Activated naive CD4-positive, alpha-beta T cell treated with anti-CD3 and anti-CD28 coated beads, Interleukin-2, amount 10 ng/mL, durations not matched to agents 7 days and 5 days (primary cell): ENCODE measurements at regions of chr2 and their contacts with region 1.

Region 1: DNA sequence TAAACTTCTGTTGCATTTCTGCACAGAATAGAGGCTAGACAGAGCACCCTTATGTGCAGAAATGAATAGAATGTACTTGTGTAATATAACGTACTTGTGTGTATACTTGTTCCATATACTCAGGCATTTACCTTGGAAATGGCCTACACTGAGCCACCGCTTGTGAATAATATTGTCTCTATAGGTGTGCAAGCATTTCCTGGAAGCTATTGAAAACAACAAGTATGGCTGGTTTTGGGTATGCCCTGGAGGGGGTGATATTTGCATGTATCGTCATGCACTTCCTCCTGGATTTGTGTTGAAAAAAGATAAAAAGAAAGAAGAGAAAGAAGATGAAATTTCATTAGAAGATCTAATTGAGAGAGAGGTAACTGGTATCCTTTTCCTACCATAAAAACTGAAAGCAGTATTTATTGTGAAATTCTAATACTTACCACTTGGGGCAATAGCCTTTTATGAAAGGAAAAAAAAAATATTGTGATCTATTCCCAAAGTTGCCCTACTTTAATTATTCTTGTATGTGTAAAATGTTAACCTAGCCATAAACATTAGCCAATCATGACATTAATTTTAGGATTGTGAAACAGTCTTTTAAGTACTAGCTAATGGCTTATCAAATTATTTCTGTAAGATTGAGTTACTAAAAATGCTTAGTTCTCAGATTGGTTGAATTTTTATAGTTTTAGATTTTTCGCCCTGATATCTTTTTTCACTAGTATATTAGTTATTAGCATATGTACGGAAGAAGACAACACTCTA is 18.0 kb downstream of the ZC3H15 start:
- DNase-seq: no peak
- H3K4me3 Mint-ChIP-seq: no peak overlapping the region
- H3K27ac Mint-ChIP-seq: peak overlapping the region; percentile 22
- H3K4me1 Mint-ChIP-seq: peaks cover 6% of the 10 kb centered on the region
- H3K27me3 Mint-ChIP-seq: no peaks in the 10 kb centered on the region

Region 2: GRCh38 chr2:186485871-186486650 is 18.0 kb before region 1 on chr2 and contains the start of gene ZC3H15:
- CTCF ChIA-PET with region 1: interaction called, 10 read pairs
- DNase-seq: peak; percentile 97
- H3K4me3 Mint-ChIP-seq: peak within 1 kb of the TSS; percentile 96
- H3K27ac Mint-ChIP-seq: peak within 1 kb of the TSS; percentile 97
- H3K4me1 Mint-ChIP-seq: peaks cover 58% of the 10 kb centered on the region
- H3K27me3 Mint-ChIP-seq: no peaks in the 10 kb centered on the region

Region 3: DNA sequence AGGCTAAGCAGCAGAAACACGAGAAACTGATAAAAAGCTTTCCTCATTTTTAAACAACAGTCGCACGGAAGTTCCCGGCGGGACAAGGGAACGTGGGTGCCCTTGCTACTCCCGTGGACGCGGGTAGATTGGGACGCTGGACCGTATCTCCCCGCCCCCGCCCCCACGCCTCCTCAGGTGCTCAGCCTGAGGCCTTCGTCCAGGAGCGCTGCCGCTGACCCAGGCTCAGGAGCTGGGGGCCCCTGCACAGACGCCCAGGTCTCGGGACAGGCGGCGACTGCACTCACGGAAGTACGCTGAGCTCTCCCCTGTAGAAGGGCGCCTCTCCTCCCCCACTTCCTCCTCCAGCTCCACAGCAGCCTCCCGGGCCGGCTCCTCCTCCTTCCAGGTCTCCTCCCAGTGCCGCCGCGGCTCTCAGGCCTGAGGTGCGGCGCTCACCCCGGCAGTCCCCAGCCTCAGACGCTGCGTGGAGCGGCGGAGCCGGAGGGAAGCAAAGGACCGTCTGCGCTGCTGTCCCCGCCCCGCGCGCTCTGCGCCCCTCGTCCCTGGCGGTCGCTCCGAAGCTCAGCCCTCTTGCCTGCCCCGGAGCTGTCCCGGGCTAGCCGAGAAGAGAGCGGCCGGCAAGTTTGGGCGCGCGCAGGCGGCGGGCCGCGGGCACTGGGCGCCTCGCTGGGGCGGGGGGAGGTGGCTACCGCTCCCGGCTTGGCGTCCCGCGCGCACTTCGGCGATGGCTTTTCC is 85.8 kb after region 1 on chr2 and contains the start of gene ITGAV:
- CTCF ChIA-PET with region 1: interaction called, 17 read pairs
- DNase-seq: peak; percentile 92
- H3K4me3 Mint-ChIP-seq: peak within 1 kb of the TSS; percentile 84
- H3K27ac Mint-ChIP-seq: peak within 1 kb of the TSS; percentile 79
- H3K4me1 Mint-ChIP-seq: peaks cover 25% of the 10 kb centered on the region
- H3K27me3 Mint-ChIP-seq: peaks cover 5% of the 10 kb centered on the region

Region 4: GRCh38 chr2:186641807-186642321 is 137.8 kb after region 1 on chr2:
- CTCF ChIA-PET with region 1: interaction called, 90 read pairs
- DNase-seq: peak; percentile 48
- H3K4me3 Mint-ChIP-seq: no peak overlapping the region
- H3K27ac Mint-ChIP-seq: no peak overlapping the region
- H3K4me1 Mint-ChIP-seq: peaks cover 15% of the 10 kb centered on the region
- H3K27me3 Mint-ChIP-seq: no peaks in the 10 kb centered on the region